A673 (cell line): ENCODE measurements at regions of chr6 and their contacts with region 1.

Region 1: DNA sequence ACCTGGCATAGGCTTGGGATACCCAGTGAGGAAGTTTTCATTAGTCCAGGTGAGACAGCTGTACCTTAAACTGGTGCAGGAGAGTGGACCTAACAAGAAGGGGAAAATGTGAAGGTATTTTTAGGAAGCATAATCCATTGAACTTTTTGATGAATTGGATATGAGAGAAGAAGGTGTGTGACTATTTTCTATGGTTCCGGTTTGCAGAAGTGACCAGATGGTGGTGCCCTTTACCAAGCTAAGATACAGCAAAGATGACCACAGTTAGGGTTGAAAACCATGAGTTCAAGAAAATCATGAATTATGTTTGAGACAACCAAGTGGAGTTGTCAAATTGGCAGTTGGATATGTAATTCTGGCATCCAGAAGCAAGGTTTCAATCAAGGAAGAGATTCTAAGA is 61.9 kb upstream of the NRSN1 start:
- DNase-seq: peak; percentile 70
- H3K4me3 ChIP-seq: no peak overlapping the region
- H3K27ac ChIP-seq: no peak overlapping the region
- H3K4me1 ChIP-seq: peaks cover 9% of the 10 kb centered on the region
- H3K27me3 ChIP-seq: no peaks in the 10 kb centered on the region
- CTCF ChIP-seq: peak; percentile 73

Region 2: DNA sequence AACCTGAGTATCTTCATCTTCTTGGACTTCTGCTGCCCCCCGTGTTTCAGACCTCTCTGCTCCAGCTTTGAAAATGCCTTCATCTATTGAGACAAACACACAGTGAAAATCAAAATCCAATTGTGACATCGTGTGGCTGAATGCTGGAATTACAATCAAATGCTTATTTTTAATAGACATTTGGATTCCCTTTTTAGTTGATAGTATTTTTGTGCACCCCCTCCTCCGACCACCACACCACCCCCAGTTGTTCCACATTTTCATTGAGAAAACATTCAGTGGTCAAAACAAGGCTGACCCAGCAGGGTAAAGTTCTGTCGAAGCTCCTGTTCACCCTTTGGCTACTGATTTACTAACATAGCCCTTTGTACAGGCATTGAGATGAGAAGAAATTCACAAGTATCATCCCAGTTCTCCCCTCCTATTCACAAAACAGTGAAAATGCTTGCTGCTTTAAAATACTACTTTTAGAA is 141.0 kb after region 1 on chr6:
- CTCF ChIA-PET with region 1: interaction called, 3 read pairs
- POLR2A ChIA-PET with region 1: no interaction called
- intact Hi-C with region 1: loop called (anchors 2 kb)
- DNase-seq: peak; percentile 68
- H3K4me3 ChIP-seq: no peak overlapping the region
- H3K27ac ChIP-seq: no peak overlapping the region
- H3K4me1 ChIP-seq: no peaks in the 10 kb centered on the region
- H3K27me3 ChIP-seq: no peaks in the 10 kb centered on the region
- CTCF ChIP-seq: peak; percentile 75

Region 3: DNA sequence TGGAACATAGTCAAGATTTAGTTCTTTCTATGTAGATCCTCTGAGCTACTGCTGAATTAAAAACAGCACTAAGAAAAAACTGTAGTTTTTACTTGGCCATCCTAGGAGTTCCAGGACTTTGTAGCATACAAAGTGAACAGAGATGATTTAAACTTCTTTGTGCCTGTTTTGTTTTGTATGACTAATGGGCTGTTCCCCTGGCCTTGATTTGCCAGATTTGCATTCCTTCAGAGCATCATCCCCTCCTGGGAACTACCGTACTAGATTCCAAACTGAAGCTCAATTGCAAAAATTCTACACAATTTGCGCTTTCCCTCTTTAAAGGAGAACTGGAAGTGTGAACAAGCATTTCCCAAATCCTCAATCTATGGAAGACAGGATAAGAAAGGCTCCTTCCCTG is 625.9 kb after region 1 on chr6:
- CTCF ChIA-PET with region 1: no interaction called
- POLR2A ChIA-PET with region 1: no interaction called
- intact Hi-C with region 1: loop called (anchors 10 kb)
- DNase-seq: no peak
- H3K4me3 ChIP-seq: no peak overlapping the region
- H3K27ac ChIP-seq: no peak overlapping the region
- H3K4me1 ChIP-seq: no peaks in the 10 kb centered on the region
- H3K27me3 ChIP-seq: no peaks in the 10 kb centered on the region
- CTCF ChIP-seq: no peak